ENCODE measurements at regions of chr12 and their contacts with region 1.

Region 1: DNA sequence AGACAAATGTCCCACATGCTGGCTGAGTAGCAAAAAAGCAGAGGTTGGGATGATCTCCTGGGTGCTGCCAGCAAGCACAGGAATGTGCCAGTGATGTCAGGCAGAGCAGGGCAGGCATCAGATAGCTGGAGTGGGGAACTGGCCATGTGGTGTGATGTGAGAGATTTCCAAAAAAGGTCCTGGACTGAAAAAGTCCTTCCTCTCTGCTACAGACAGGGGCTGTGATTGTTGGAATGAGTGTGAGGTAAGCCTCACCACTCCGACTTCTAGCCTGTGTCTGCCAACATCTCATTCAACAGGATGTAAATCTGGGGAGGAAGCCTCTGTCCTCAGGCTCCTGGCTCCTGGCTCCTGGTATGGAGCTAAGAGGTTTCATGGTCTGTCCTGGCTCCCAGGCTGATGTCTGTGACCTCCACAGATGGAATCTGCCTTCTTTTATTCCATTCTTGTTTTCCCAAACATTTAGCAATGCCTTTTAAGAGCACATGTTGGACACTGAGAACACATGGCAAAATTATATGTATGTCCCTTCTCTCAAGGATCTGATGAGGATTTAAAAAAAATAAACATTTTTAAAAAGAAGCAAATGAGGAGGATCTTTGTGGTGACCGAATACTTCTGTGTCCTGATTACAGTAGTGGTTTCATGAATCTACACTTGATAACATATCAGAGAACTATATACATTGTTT is 50.1 kb upstream of the STK38L start:
- DNase-seq: no peak
- ATAC-seq: peak; percentile 90

Region 2: GRCh38 chr12:27179400-27180214 is 14.4 kb before region 1 on chr12:
- intact Hi-C with region 1: loop called (anchors 2 kb)
- DNase-seq: no peak
- ATAC-seq: peak; percentile 88

Region 3: DNA sequence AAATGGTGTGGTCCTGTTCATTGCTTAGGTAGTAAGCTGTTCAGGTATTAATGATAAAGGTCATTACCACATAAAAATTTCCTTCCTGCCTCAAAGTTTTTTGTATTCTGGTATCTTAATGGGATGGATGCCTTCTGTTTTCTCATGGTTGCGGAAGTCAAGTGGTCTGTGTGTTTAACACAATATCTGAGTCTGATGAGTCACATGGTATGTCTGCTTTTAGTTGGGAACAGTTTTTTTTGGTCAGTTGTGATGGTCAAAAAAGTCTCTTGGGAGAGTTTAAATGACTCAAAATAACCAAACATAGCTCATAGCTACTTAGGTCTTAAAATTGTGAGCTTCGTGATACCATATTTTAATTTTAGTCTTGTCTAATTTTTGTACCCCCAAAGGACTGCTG is 90.8 kb after region 1 on chr12:
- intact Hi-C with region 1: loop called (anchors 10 kb)
- DNase-seq: no peak
- ATAC-seq: peak; percentile 36

Measured in Right ventricle myocardium inferior (tissue), 1 donor.